Activated CD4-positive, alpha-beta memory T cell treated with anti-CD3 and anti-CD28 coated beads for 36 hours (primary cell): ENCODE measurements at regions of chr2 and their contacts with region 1.

Region 1: GRCh38 chr2:70647873-70648481 is 94.4 kb upstream of the TGFA start:
- DNase-seq: peak; percentile 83
- H3K4me3 Mint-ChIP-seq: no peak overlapping the region
- H3K27ac Mint-ChIP-seq: no peak overlapping the region
- H3K4me1 Mint-ChIP-seq: no peaks in the 10 kb centered on the region
- H3K27me3 Mint-ChIP-seq: no peaks in the 10 kb centered on the region

Region 2: DNA sequence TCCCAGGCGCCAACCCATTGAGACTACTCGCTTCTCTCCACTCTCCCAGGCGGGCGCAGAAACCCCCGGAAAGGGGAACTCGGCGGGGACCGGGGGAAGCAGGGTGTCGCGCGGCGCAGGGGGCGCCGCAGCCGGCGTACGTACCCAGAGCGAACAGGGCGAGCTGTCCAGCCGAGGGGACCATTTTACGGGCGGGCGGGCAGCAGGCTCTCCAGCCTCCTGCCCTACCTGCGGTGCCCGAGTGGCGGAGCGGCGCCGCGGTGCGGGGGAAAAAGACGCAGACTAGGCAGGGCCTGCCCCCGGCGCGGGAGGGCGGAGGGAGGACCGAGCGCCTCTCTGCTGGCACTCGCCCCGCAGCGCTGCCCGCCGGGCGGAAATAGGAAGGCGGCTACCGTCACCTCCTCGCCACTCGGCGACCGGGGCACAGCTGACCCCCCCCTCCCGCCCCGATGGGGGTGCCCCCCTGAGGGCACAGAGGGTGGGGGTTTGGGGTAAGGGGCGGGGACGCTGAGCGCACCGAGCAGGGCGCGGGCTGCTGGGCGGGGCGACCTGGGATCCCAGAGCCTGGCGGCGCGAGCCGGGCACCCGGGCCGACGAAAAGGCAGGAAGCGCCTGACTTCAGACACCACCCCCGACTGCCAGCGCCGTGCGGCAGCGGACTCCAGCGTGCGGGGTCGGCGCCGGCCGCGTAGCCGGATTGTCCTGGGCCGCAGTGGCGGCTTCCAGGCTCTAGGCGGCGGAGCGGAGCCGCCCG is 94.2 kb before region 1 on chr2 and contains the start of gene TGFA:
- CTCF ChIA-PET with region 1: interaction called, 3 read pairs
- POLR2A ChIA-PET with region 1: no interaction called
- intact Hi-C with region 1: loop called (anchors 5 kb)
- DNase-seq: peak; percentile 77
- H3K4me3 Mint-ChIP-seq: peak within 1 kb of the TSS; percentile 75
- H3K27ac Mint-ChIP-seq: no peak within 1 kb of the TSS
- H3K4me1 Mint-ChIP-seq: peaks cover 20% of the 10 kb centered on the region
- H3K27me3 Mint-ChIP-seq: peaks cover 17% of the 10 kb centered on the region
- total RNA-seq, gene TGFA: 0.50 to 0.58 TPM